AG04449 (cell line): ENCODE measurements at regions of chr4 and their contacts with region 1.

Region 1: DNA sequence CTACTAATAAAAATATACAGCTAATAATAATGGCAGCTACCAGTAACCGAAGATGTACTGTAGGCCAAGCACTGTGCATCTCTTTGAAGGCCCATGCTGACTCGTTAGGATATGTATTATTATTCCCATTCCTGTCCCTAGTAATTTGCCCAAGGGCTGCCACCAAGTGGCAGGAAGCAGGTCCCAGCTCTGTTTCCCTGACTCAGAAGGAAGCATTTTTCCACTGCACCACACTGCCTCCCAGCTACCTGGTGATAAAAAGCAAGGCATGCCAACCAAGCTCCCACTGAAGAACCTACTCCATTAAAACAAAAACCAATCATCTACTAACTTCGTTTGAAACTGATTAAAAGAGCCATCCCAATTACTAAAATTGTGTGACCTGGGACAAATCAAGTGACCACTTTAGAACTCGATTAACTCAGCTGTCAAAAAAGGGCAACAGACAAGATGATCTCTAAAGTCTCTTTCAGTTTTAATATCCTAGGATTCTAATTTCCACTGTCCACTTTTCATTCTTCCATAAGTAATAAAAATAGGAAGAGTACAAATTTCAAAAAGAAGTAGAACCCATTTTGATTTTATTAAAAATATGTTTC is 24.3 kb upstream of the PGM2 start:
- DNase-seq: no peak
- H3K4me3 ChIP-seq: no peak overlapping the region
- CTCF ChIP-seq: peak; percentile 60

Region 2: DNA sequence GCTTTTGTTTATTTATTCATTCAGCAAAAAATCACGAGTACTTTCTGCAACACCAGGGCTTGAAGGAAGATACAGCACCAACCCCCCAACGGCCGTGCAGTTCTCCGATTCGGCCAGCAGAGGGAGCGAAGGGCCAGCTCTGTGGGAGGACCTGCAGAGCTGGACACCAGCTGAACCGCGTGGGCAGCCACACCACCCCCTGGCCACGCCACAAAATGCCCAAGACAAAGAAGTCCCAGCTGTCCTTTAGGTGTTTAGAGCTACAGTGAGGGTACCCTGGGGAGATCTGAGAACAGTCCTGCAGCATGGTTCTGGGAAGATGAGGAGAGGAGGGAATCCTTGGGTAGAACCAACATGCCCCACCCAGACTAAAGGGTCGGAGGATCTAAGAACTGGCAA is 199.1 kb before region 1 on chr4:
- CTCF ChIA-PET with region 1: interaction called, 260 read pairs
- POLR2A ChIA-PET with region 1: interaction called, 4 read pairs
- DNase-seq: no peak
- H3K4me3 ChIP-seq: no peak overlapping the region
- CTCF ChIP-seq: peak; percentile 97

Region 3: DNA sequence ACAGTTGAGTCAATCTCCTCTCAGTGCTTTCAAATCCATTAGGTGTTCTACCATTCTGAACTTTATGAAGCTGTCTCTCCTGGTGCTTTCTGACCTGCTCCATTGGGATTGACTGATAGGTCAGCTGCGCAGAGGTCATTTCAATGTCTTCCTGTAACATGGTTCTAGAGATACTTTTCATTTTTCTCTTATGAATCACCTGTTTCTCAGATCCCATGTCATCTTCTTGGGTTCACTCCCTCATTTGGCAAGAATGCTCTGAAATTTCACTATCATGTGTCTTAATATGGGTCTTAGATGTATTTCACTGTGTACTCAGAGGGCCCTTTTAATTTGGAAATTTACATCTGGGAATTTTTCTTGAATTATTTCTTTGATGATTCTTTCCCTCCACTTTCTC is 10.5 kb after region 1 on chr4:
- CTCF ChIA-PET with region 1: interaction called, 17 read pairs
- POLR2A ChIA-PET with region 1: no interaction called
- DNase-seq: no peak
- H3K4me3 ChIP-seq: no peak overlapping the region
- CTCF ChIP-seq: no peak

Region 4: GRCh38 chr4:37826295-37827029 is 24.3 kb after region 1 on chr4 and contains the start of gene PGM2:
- CTCF ChIA-PET with region 1: interaction called, 10 read pairs
- POLR2A ChIA-PET with region 1: no interaction called
- DNase-seq: no peak
- H3K4me3 ChIP-seq: peak within 1 kb of the TSS; percentile 84
- CTCF ChIP-seq: peak; percentile 16

Region 5: GRCh38 chr4:38030023-38030422 is 227.9 kb after region 1 on chr4:
- CTCF ChIA-PET with region 1: interaction called, 199 read pairs
- POLR2A ChIA-PET with region 1: no interaction called
- DNase-seq: no peak
- H3K4me3 ChIP-seq: no peak overlapping the region
- CTCF ChIP-seq: no peak

Region 6: DNA sequence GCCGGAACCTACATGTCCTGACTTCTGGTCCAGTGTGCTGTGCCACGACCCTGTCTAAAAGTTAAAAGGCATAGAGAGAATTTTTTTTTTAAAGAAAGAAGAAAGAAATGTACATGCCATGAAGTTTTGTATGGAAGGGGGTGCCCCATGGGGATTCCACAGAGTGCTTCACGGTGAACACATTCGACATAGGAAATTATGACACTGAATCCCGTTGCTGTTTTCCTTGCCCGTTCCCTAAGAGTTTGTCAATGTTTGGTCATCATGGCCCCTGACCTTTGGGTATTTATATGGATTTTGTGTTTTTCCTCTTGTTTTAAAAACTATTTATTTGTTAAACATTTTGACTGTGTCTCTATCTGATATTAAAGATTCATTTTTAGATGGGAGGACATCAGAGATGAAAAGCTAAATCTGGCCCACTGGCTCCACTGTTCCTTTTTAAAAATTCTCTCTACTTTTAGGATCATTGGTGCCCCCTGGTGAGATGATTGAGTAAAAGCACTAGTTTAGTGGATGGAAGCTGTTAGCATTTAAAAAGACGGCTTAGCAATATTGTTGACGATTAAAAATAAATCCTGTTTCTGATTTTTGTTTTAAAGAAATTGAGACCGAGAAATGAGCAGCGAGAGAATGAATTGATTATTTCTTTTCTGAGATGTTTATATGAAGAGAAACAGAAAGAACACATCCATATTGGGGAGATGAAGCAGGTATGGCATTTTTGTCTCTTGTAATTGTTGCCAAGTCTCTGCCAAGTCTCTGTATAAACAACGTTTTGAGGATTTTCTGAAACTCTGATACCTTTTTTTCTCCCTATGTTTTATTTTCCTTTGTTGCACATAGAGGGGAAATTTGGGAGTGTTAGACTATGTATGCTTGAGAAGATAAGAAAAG is 233.1 kb after region 1 on chr4:
- CTCF ChIA-PET with region 1: interaction called, 199 read pairs
- POLR2A ChIA-PET with region 1: no interaction called
- DNase-seq: no peak
- H3K4me3 ChIP-seq: no peak overlapping the region
- CTCF ChIP-seq: peak; percentile 44

Region 7: DNA sequence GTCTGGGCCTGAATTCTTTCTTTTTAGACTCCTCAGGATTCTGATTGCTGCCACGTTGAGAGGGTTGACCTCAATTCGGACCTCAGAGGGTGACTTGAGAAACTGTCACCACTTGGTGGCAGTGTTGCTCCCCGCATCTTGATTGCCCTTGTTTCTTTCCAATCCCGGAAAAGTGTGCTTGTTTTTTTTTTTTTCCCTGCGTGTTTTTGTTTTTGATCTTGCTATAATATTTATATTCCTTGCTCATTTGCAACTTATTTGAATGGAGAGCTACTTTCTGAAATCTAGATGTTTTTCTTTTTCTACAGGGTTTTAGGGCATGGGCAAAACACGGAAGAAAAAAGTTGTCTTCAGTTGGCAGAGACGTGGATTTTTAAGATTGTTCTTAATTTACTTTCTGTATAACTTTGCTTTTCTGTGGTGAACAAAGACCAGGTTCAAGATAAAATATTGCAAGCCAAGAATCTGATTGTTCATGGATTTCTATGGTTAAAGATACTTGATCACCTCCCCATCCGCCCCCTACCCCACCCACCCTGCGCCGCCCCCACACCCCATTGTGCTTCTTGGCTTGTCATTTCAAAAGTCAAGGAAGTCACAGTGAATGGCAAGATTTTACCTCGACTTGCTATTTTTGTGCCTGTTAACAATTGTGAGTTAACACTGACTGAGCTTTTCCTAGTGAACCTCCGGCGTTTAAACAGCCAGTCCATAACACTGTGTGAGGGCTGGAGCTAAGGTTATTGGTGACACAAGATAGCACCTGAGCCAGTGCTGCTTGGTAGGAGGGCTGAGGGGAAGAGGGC is 260.1 kb after region 1 on chr4:
- CTCF ChIA-PET with region 1: interaction called, 11 read pairs
- POLR2A ChIA-PET with region 1: no interaction called
- DNase-seq: no peak
- H3K4me3 ChIP-seq: no peak overlapping the region
- CTCF ChIP-seq: peak; percentile 62